HEK293T (cell line): ENCODE measurements at regions of chr10 and their contacts with region 1.

Region 1: GRCh38 chr10:72273410-72274212 is at the start of gene DDIT4:
- DNase-seq: peak; percentile 95

Region 2: GRCh38 chr10:72223743-72224101 is 49.9 kb before region 1 on chr10:
- CTCF ChIA-PET with region 1: interaction called, 3 read pairs
- POLR2A ChIA-PET with region 1: interaction called, 35 read pairs
- DNase-seq: no peak

Region 3: GRCh38 chr10:72238392-72239175 is 35.0 kb before region 1 on chr10:
- CTCF ChIA-PET with region 1: interaction called, 3 read pairs
- POLR2A ChIA-PET with region 1: interaction called, 46 read pairs
- DNase-seq: no peak

Region 4: DNA sequence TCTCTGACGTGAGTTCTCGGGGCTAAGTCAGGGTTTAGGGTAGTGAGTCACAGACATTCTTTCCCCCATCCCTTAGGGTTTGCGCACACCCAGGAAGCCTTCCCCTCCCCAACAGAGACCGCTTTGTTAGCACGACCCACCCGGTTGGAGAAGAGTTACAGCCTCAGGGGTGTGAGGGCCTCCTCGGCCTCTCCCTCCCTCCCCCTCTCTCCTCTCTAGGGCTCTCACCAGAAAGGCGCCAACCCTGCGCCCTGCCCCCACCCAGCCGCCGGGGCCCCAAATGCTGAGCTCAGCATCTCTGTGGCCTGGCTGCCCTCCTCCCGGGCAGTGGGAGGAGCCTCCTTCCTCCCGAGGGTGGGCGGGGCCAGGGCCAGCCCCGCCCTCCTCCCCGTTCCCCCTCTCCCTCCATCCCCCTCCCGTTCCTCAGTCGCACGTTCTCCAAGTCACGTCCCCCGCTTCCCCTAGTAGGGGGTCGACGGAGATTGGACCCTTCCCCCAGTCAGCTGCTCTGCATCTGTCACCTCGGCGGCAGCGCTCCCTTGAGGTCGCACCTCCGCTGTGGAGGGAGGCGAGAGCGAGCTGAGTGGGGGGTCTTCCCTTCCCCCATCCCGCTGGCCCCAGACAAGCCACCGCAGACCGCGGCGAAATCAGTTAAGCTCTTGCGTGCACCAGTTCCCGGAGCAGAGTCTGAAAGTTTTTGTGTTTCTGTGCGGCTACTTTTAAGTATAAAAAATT is 12.9 kb before region 1 on chr10:
- CTCF ChIA-PET with region 1: interaction called, 10 read pairs
- POLR2A ChIA-PET with region 1: interaction called, 317 read pairs
- DNase-seq: peak; percentile 96

Region 5: DNA sequence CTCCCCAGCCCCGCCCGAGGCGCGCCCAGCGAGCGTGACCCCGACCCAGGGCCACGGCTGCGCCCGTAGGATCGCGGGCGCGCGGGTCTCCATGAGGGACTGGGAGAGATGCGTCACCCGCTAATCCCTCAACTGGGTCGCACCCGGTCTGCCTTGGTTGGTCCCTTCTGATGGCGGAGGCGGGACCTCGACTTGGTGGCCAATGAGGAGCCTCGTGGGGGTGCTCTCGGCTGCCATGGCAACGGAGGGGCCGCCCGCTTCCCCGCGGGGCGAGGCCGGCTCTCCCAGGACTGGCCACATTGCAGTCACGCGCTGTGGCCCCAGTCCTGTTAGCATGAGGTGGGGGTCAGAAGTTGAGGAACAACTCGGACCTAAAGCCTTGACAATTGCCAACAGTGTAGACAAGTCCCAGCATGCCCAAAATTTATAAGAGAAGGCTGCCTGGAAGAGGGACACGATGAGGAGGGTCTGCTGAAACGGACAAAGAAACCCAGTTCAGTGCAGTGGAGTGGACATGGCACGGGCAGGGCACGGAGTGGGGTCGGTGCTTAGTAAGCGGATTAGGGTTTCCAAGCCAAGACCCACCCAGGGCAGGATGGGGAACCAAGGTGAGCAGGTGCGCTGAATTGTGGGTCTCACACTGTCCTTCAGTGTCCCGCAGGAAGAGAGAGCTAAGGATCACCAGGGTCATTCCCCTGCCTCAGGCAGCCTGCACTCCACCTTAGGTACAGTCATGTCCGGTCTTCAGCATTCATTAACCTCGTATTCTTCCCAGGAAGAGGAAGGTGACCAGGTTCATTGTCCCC is 24.6 kb after region 1 on chr10:
- CTCF ChIA-PET with region 1: no interaction called
- POLR2A ChIA-PET with region 1: interaction called, 52 read pairs
- DNase-seq: peak; percentile 94

Region 6: GRCh38 chr10:72319416-72320254 is 46.0 kb after region 1 on chr10:
- CTCF ChIA-PET with region 1: interaction called, 11 read pairs
- POLR2A ChIA-PET with region 1: interaction called, 517 read pairs
- DNase-seq: peak; percentile 74

Region 7: GRCh38 chr10:72337020-72337629 is 63.5 kb after region 1 on chr10:
- CTCF ChIA-PET with region 1: interaction called, 4 read pairs
- POLR2A ChIA-PET with region 1: interaction called, 517 read pairs
- DNase-seq: peak; percentile 73